ENCODE measurements at regions of chr16 and their contacts with region 1.

Region 1: DNA sequence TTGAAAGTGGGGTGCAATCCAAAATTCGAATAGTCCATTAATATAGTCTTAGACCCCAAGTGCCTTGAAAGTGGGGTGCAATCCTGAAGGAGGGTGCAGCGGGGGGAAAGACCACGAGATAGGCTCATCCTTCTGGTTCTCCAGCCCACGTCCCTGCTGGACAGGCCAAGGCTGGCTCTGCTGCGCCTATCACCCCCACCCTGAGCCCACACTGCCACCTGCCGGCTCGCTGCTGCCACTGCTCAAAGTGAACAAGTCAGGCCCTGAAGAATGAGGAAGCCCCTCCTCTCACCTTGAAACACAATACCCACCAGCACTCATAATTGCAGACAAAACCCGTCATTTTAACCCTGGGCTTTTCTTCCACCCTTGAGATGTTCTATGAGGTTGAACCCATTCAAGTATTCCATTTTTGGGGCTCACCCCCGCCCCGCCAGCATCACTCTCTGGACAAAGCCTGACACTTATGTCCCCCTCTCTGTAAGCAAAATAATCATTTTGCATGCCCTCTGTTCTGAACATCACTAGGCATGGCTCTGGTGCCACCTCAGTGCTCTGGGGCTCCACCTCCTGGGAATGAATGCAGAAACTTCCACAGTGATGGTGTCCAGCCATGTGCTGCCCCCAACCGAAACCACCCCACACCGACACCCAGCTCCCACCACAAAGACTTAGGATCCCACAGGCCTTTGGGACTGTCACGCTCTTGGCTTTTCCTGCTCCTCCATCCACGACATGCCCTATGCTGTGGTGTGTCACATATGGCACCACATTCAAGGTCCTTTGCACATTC is 56.8 kb downstream of the BEAN1 start:
- DNase-seq: peak; percentile 67 to 85 (median 79)
- H3K4me3 ChIP-seq: no peak overlapping the region
- H3K27ac ChIP-seq: no peak overlapping the region
- H3K4me1 ChIP-seq: no peaks in the 10 kb centered on the region
- H3K27me3 ChIP-seq: no peaks in the 10 kb centered on the region
- CTCF ChIP-seq: peak; percentile 72 to 86 (median 85)
- EP300 ChIP-seq: no peak
- POLR2A ChIP-seq: no peak

Region 2: GRCh38 chr16:66364117-66364967 is 119.5 kb before region 1 on chr16:
- intact Hi-C with region 1: loop called in 1 of 4 experiments (anchors 5 kb)
- DNase-seq: peak; percentile 56 to 75 (median 72)
- H3K4me3 ChIP-seq: no peak overlapping the region
- H3K27ac ChIP-seq: peak overlapping the region in 1 of 2 donors; percentile 21
- H3K4me1 ChIP-seq: peaks cover 9% of the 10 kb centered on the region
- H3K27me3 ChIP-seq: no peaks in the 10 kb centered on the region
- CTCF ChIP-seq: no peak
- EP300 ChIP-seq: no peak
- POLR2A ChIP-seq: no peak

Region 3: DNA sequence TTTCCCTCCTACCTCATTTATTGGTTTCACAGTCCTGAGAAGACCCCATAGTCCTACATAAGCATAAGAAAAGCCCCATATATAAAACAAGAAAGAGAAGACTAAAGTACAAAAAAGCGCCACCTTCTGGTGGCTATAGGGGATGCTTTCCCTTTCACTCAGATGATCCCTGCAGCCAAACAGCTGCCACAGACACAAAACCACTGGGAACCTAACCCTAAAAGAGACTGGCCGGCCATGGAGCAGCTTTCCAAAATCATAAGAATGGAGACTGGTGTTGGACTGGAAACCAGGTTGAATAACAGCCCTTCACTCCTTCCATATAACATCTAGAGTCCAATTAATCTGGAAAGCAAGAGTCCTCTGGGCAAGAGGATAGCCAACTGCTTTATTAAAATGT is 256.1 kb after region 1 on chr16:
- intact Hi-C with region 1: no loop called
- DNase-seq: no peak
- H3K4me3 ChIP-seq: no peak overlapping the region
- H3K27ac ChIP-seq: no peak overlapping the region
- H3K4me1 ChIP-seq: peaks cover 2% of the 10 kb centered on the region
- H3K27me3 ChIP-seq: no peaks in the 10 kb centered on the region
- CTCF ChIP-seq: no peak
- EP300 ChIP-seq: no peak
- POLR2A ChIP-seq: no peak

Region 4: GRCh38 chr16:66858740-66859396 is 375.0 kb after region 1 on chr16:
- intact Hi-C with region 1: no loop called
- DNase-seq: no peak
- H3K4me3 ChIP-seq: no peak overlapping the region
- H3K27ac ChIP-seq: no peak overlapping the region
- H3K4me1 ChIP-seq: no peaks in the 10 kb centered on the region
- H3K27me3 ChIP-seq: no peaks in the 10 kb centered on the region
- CTCF ChIP-seq: no peak
- EP300 ChIP-seq: no peak
- POLR2A ChIP-seq: no peak

Measured in ovary (tissue), 10 donors.